Prostate gland (tissue), 2 donors: ENCODE measurements at regions of chr5 and their contacts with region 1.

Region 1: GRCh38 chr5:126777974-126778674 is 1.2 kb downstream of the LMNB1 start:
- DNase-seq: peak; percentile 67
- H3K4me3 ChIP-seq: peak overlapping the region; percentile 44 to 68
- H3K27ac ChIP-seq: peak overlapping the region; percentile 79 to 86
- H3K4me1 ChIP-seq: no peaks in the 10 kb centered on the region
- H3K27me3 ChIP-seq: no peaks in the 10 kb centered on the region
- CTCF ChIP-seq: no peak
- POLR2A ChIP-seq: peak; percentile 56

Region 2: GRCh38 chr5:126676195-126676624 is 101.9 kb before region 1 on chr5:
- intact Hi-C with region 1: loop called (anchors 2 kb)
- DNase-seq: peak; percentile 67
- H3K4me3 ChIP-seq: no peak overlapping the region
- H3K27ac ChIP-seq: no peak overlapping the region
- H3K4me1 ChIP-seq: no peaks in the 10 kb centered on the region
- H3K27me3 ChIP-seq: no peaks in the 10 kb centered on the region
- CTCF ChIP-seq: peak; percentile 44 to 79 (median 78)
- POLR2A ChIP-seq: no peak

Region 3: DNA sequence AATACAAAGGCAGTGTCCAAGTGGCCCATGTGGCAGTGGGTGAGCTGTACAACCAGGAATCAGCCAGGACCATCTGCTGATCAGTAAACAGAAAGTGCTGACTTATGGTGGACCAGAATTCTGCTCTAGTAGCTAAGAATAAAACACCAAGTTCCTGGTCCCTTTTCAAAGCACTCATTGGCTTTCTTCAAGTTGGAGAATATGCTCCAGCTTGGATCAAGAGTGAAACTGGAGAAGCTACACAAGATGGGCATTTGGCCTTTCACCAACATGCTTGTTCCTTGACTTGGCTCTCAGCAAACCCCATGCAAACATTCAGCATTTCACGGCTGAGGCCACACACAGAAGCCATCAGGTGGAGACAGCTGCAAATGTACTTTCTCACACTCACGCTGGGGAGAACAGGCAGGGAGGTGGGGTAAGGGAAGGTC is 220.1 kb after region 1 on chr5:
- intact Hi-C with region 1: no loop called
- DNase-seq: no peak
- H3K4me3 ChIP-seq: no peak overlapping the region
- H3K27ac ChIP-seq: no peak overlapping the region
- H3K4me1 ChIP-seq: no peaks in the 10 kb centered on the region
- H3K27me3 ChIP-seq: no peaks in the 10 kb centered on the region
- CTCF ChIP-seq: no peak
- POLR2A ChIP-seq: no peak